PC-9 (cell line): ENCODE measurements at regions of chr7 and their contacts with region 1.

Region 1: DNA sequence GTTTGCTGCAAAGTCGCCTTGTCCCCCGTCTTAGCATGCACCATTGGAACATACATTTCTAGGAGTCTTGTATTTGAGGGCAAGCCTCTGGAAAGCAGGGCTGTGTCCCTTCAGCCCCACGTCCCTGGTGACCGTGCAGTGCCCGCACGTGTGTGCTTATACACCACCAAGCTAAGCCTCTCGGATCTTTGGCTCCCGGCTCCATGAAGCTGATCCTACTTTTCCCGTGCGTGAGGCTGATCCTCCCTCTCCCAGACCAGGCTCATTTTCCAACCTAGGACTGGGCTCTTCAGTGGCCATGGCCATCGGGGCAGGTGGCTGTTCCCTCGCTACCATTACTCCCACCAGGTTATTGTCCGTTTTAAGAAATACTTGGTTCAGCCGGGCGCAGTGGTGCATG is 14.3 kb downstream of the MDH2 start:
- DNase-seq: no peak
- H3K4me3 ChIP-seq: no peak overlapping the region
- H3K27ac ChIP-seq: no peak overlapping the region
- H3K4me1 ChIP-seq: no peaks in the 10 kb centered on the region
- H3K27me3 ChIP-seq: no peaks in the 10 kb centered on the region
- CTCF ChIP-seq: no peak

Region 2: GRCh38 chr7:76155938-76156337 is 93.7 kb after region 1 on chr7:
- CTCF ChIA-PET with region 1: interaction called, 15 read pairs
- POLR2A ChIA-PET with region 1: no interaction called
- intact Hi-C with region 1: no loop called
- DNase-seq: no peak
- H3K4me3 ChIP-seq: no peak overlapping the region
- H3K27ac ChIP-seq: no peak overlapping the region
- H3K4me1 ChIP-seq: no peaks in the 10 kb centered on the region
- H3K27me3 ChIP-seq: no peaks in the 10 kb centered on the region
- CTCF ChIP-seq: no peak